ENCODE measurements at regions of chr19 and their contacts with region 1.

Region 1: DNA sequence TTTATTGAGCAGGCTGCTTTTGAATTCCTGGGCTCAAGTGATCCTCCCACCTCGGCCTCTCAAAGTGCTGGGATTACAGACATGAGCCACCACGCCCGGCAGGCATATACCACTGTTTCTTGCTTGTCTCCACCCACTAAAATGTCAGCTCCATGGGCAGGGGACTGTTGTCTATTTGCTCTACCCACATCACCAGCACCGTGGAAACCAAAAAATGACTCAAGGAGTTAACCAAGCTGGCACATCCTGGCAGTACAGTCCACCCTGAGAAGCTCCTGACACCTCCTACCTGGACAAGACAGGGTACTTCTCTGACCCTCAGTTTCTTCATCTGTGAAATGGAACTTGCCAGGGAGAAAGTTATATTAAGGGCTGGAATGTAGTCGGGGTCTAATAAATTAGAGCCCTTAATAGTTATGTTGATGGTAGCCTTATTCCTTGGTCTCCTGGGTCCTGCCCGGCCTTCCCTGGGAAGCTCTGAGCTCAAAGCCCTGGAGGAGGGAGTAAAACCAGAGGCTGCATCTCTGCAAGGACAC is 13.9 kb downstream of the RDH8 start:
- DNase-seq: no peak
- H3K4me3 ChIP-seq: no peak overlapping the region
- CTCF ChIP-seq: no peak

Region 2: DNA sequence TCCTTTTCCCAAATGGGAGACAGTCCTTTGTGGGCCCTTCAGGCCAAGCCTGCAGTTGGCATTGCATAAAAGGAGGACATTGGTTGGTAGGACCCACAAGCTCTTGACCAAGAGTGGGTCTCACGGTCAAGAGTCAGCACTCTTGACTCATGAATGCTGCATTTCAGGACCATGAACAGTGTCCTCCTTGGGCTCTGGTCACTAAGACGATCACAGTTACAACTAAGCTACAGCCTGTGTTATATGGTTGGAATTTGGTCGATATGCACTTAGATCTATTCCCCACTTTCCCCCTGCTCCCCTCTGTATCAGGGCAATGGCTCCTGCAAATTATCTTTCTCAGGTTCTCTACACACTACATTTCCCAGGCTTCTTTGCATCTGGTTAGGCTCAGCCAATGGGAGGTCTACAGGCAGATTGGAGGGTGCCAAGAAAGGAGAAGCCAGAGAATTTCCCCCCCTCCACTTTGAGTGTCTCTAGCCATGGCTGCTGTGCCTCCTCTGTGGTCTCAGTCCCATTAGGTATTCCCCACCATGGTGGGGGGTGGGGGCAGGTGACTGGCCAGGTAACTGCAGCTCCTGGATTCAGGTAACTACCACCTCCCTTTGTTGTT is 87.8 kb before region 1 on chr19:
- CTCF ChIA-PET with region 1: interaction called, 13 read pairs
- POLR2A ChIA-PET with region 1: no interaction called
- DNase-seq: no peak
- H3K4me3 ChIP-seq: no peak overlapping the region
- CTCF ChIP-seq: no peak

Region 3: GRCh38 chr19:9958379-9958821 is 68.8 kb before region 1 on chr19:
- CTCF ChIA-PET with region 1: interaction called, 18 read pairs
- POLR2A ChIA-PET with region 1: no interaction called
- DNase-seq: peak; percentile 84
- H3K4me3 ChIP-seq: no peak overlapping the region
- CTCF ChIP-seq: no peak

Region 4: GRCh38 chr19:9986787-9987281 is 40.4 kb before region 1 on chr19:
- CTCF ChIA-PET with region 1: interaction called, 13 read pairs
- POLR2A ChIA-PET with region 1: no interaction called
- DNase-seq: no peak
- H3K4me3 ChIP-seq: no peak overlapping the region
- CTCF ChIP-seq: no peak

Region 5: DNA sequence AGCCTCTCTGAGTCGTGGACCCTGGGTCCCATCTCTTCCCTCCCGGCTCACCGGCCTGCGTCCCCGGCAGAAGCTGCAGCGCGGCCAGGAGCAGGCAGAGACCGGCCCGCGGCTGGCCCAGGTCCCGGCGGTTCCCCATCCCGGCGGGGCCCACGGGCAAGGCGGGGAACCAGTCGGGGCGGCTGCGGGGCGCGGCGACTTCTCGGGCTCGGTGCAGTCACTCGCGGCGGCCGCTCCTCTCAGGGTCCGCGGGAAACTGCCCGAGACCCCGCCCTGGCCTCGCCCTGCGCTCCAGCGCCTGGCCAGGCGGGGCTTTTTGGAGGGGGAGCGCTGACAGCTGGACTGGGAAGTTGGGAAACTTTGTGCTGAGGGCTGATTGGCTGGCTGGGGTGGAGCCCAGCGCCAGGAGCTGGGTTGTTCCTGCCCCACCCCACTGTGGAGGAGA is 17.0 kb before region 1 on chr19 and contains the start of gene COL5A3:
- CTCF ChIA-PET with region 1: interaction called, 13 read pairs
- POLR2A ChIA-PET with region 1: interaction called, 8 read pairs
- DNase-seq: no peak
- H3K4me3 ChIP-seq: peak within 1 kb of the TSS; percentile 65
- CTCF ChIP-seq: no peak

Region 6: DNA sequence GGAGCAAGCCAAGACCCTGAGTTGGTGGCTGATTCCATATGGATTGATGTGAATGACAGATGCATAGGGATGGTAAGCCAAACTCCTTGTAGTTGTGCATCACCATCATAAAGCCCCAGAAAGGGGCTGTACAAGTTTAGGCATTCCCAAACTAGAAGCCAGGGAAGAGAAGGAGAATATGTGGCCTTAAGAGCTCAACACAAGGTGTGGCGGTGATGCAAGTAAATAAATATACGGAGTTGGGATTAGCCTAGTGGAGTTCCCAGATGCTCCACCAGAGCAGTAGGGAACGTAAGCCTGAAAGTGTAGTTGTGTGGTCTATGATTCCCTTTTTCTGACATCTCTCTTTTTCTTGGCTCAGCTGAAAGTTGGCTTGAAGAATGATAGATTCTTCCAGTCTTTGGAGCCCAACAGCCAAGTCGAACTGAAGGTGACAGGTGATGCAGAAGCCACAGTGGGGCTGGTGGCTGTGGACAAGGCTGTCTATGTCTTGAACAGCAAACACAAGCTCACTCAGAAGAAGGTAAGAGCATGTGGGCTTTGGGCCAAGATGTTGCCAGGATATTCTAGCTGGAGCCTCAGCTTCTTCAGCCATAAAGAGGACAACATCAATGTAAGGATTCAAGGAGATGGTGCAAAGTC is 16.2 kb after region 1 on chr19:
- CTCF ChIA-PET with region 1: interaction called, 14 read pairs
- POLR2A ChIA-PET with region 1: no interaction called
- DNase-seq: no peak
- H3K4me3 ChIP-seq: no peak overlapping the region
- CTCF ChIP-seq: no peak